ENCODE measurements at regions of chr1 and their contacts with region 1.

Region 1: GRCh38 chr1:212782422-212783154 is 9.0 kb downstream of the NSL1 start:
- DNase-seq: peak in 3 of 14 experiments; percentile 40 to 59 (median 47)
- ATAC-seq: peak; percentile 60
- H3K4me3 ChIP-seq: no peak overlapping the region
- H3K4me3 Mint-ChIP-seq: no peak overlapping the region
- H3K27ac ChIP-seq: no peak overlapping the region
- H3K27ac Mint-ChIP-seq: peak overlapping the region; percentile 11
- H3K4me1 ChIP-seq: no peaks in the 10 kb centered on the region
- H3K4me1 Mint-ChIP-seq: peaks cover 8% of the 10 kb centered on the region
- H3K27me3 ChIP-seq: no peaks in the 10 kb centered on the region
- H3K27me3 Mint-ChIP-seq: no peaks in the 10 kb centered on the region
- CTCF ChIP-seq: peak; percentile 72

Region 2: GRCh38 chr1:212749821-212750535 is 32.6 kb before region 1 on chr1:
- CTCF ChIA-PET with region 1: no interaction called
- POLR2A ChIA-PET with region 1: interaction called, 3 read pairs
- intact Hi-C with region 1: loop called (anchors 5 kb)
- DNase-seq: peak in 4 of 14 experiments; percentile 13 to 67 (median 42)
- ATAC-seq: peak; percentile 27
- H3K4me3 ChIP-seq: no peak overlapping the region
- H3K4me3 Mint-ChIP-seq: peak overlapping the region; percentile 4
- H3K27ac ChIP-seq: peak overlapping the region in 1 of 2 donors; percentile 14
- H3K27ac Mint-ChIP-seq: peak overlapping the region; percentile 78
- H3K4me1 ChIP-seq: peaks cover 29% of the 10 kb centered on the region
- H3K4me1 Mint-ChIP-seq: peaks cover 54% of the 10 kb centered on the region
- H3K27me3 ChIP-seq: no peaks in the 10 kb centered on the region
- H3K27me3 Mint-ChIP-seq: no peaks in the 10 kb centered on the region
- CTCF ChIP-seq: peak; percentile 69

Region 3: GRCh38 chr1:213008564-213008963 is 226.0 kb after region 1 on chr1:
- CTCF ChIA-PET with region 1: no interaction called
- POLR2A ChIA-PET with region 1: no interaction called
- intact Hi-C with region 1: no loop called
- DNase-seq: peak in 1 of 14 experiments; percentile 32
- ATAC-seq: no peak
- H3K4me3 ChIP-seq: no peak overlapping the region
- H3K4me3 Mint-ChIP-seq: no peak overlapping the region
- H3K27ac ChIP-seq: no peak overlapping the region
- H3K27ac Mint-ChIP-seq: no peak overlapping the region
- H3K4me1 ChIP-seq: no peaks in the 10 kb centered on the region
- H3K4me1 Mint-ChIP-seq: peaks cover 34% of the 10 kb centered on the region
- H3K27me3 ChIP-seq: no peaks in the 10 kb centered on the region
- H3K27me3 Mint-ChIP-seq: no peaks in the 10 kb centered on the region
- CTCF ChIP-seq: no peak